ENCODE measurements at regions of chr2 and their contacts with region 1.

Region 1: DNA sequence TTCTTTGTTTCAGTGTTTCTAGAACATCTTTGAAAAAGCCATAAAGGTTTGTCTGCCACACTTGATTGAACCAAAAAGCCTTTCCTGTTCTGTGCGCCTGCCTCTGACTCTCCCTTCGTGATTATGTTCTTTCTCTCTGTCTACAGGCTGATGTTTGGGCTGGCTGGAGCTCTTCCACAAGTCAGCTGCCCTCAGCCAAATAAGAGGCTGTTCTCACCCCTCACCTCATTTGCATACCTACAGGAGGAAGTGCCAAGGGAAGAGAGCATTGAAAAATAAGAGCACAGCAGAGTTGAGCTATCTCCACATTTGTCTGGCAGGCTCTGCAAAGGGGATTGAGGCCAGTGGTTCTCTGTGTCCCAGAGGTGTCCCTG is 15.8 kb downstream of the INPP5D start:
- DNase-seq: no peak
- ATAC-seq: peak; percentile 73
- H3K4me3 Mint-ChIP-seq: no peak overlapping the region
- H3K27ac Mint-ChIP-seq: no peak overlapping the region
- H3K4me1 Mint-ChIP-seq: peaks cover 47% of the 10 kb centered on the region
- H3K27me3 Mint-ChIP-seq: no peaks in the 10 kb centered on the region
- CTCF ChIP-seq: no peak

Region 2: GRCh38 chr2:233037078-233037477 is 38.9 kb before region 1 on chr2:
- CTCF ChIA-PET with region 1: no interaction called
- POLR2A ChIA-PET with region 1: no interaction called
- intact Hi-C with region 1: no loop called
- DNase-seq: no peak
- ATAC-seq: no peak
- H3K4me3 Mint-ChIP-seq: no peak overlapping the region
- H3K27ac Mint-ChIP-seq: no peak overlapping the region
- H3K4me1 Mint-ChIP-seq: no peaks in the 10 kb centered on the region
- H3K27me3 Mint-ChIP-seq: peaks cover 2% of the 10 kb centered on the region
- CTCF ChIP-seq: no peak

Region 3: DNA sequence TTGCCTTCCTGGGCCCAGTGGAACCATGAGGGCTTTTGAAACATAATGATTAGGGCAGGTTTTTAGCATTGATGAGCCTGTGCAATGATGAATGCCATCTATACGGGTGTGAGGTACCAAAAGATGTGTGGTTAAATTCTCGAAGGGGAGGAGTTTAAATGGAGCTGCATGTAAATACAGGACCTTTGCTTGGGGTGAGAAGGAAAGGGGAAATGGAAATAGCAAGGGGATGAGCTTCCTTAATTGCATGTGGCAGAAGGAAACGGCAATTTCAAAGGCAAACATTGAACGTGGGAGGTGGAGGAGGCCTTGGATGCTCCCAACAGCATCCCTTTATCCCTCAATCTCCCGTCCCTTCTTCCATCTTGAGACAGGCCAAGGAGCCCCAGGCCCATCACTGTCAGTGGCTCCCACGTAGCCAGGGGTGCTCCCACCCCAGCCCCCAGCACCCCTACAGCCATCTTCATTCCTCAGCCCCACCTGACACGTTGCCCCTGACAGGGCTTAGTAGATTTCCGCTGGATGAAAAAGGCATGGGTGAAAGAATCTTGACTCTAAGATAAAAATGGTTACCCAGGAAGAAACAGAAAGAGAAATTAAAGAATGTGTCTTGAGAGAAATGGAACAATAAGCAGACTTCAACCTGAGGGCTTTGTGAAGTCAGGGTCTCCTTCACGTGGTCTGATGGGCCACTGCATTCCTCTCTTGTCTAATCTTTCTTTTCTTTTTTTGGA is 16.6 kb after region 1 on chr2:
- CTCF ChIA-PET with region 1: no interaction called
- POLR2A ChIA-PET with region 1: interaction called, 319 read pairs
- intact Hi-C with region 1: loop called (anchors 1 kb)
- DNase-seq: peak; percentile 18
- ATAC-seq: peak; percentile 76
- H3K4me3 Mint-ChIP-seq: peak overlapping the region; percentile 79
- H3K27ac Mint-ChIP-seq: peak overlapping the region; percentile 87
- H3K4me1 Mint-ChIP-seq: peaks cover 92% of the 10 kb centered on the region
- H3K27me3 Mint-ChIP-seq: no peaks in the 10 kb centered on the region
- CTCF ChIP-seq: no peak

Region 4: DNA sequence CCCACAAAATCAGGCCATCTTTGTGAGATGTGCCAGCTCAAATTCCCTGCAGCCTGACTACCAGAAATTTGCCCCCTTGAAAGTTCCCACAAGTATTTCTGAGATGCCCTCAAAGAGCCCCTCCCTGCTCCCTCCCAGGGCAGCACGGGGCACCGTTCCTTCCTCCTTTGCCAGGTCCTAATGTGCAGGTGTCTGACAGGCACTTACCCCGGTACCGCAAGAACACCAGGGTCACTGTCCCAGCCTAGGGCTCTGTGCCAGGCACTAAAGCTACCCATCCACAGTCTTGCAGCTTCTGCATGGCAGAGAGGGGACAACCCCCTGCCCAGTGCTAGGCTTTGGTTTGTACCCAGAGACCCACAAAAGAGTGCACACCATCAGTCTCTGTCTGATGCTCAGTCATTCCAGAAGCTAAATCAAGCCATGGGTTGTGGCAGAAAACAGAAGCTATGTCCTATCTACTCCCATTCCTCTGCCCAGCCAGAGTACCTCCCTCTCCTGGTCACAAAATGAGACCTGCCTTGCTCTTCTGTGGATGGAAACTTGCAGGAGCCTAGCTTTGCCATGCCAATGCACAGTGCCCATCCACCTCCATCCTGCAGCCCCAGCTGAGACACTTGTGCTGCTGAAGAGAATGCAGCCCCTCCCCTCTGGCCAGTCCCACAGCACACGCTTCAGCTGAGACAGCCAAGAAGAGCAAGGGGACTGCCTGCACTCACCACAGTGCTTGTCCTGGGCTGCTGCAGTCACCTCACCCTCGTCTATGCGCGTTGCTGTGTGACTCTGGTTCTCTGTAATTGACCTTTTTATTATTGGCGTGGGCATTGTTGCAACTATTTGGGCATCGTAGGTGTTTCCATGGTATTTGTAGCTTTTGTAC is 32.9 kb after region 1 on chr2:
- CTCF ChIA-PET with region 1: no interaction called
- POLR2A ChIA-PET with region 1: interaction called, 319 read pairs
- intact Hi-C with region 1: no loop called
- DNase-seq: no peak
- ATAC-seq: peak; percentile 84
- H3K4me3 Mint-ChIP-seq: peak overlapping the region; percentile 45
- H3K27ac Mint-ChIP-seq: peak overlapping the region; percentile 83
- H3K4me1 Mint-ChIP-seq: peaks cover 86% of the 10 kb centered on the region
- H3K27me3 Mint-ChIP-seq: no peaks in the 10 kb centered on the region
- CTCF ChIP-seq: no peak

Region 5: GRCh38 chr2:233124421-233125080 is 48.6 kb after region 1 on chr2:
- CTCF ChIA-PET with region 1: interaction called, 5 read pairs
- POLR2A ChIA-PET with region 1: interaction called, 7 read pairs
- intact Hi-C with region 1: loop called (anchors 1 kb)
- DNase-seq: peak; percentile 73
- ATAC-seq: peak; percentile 97
- H3K4me3 Mint-ChIP-seq: peak overlapping the region; percentile 78
- H3K27ac Mint-ChIP-seq: peak overlapping the region; percentile 92
- H3K4me1 Mint-ChIP-seq: peaks cover 52% of the 10 kb centered on the region
- H3K27me3 Mint-ChIP-seq: no peaks in the 10 kb centered on the region
- CTCF ChIP-seq: no peak

Region 6: DNA sequence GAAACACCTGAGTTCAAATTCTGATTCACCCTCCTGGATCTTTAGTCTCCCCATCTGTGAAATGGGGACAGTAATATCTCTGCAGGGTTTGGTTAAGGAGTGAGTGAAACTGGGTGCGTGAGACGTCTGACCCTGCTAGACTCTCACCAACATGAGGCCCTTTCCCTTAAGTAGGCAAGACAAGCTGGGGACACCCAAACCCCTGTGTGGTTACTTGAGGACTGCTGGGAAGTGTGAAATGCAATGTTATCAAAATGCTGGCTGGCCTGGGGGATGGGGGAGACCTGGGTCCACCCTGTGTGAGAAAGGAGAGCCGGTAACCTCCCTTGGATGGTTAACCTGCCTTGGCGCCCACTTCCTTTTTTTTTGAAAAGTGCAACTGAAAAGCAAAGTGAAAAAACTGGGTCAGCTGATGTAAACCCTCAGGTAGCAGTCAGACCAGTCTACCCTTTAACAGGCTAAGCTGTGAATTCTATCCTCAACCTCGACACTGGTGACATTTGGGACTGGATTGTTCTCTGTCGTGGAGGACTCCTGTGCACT is 66.5 kb after region 1 on chr2:
- CTCF ChIA-PET with region 1: no interaction called
- POLR2A ChIA-PET with region 1: interaction called, 5 read pairs
- intact Hi-C with region 1: loop called (anchors 5 kb)
- DNase-seq: peak; percentile 30
- ATAC-seq: peak; percentile 83
- H3K4me3 Mint-ChIP-seq: no peak overlapping the region
- H3K27ac Mint-ChIP-seq: peak overlapping the region; percentile 78
- H3K4me1 Mint-ChIP-seq: peaks cover 30% of the 10 kb centered on the region
- H3K27me3 Mint-ChIP-seq: no peaks in the 10 kb centered on the region
- CTCF ChIP-seq: no peak

Measured in activated B cell treated with CpG ODN at 0.5 μM for 24 hours (primary cell).